Lower lobe of right lung (tissue), 2 donors: ENCODE measurements at regions of chr13 and their contacts with region 1.

Region 1: GRCh38 chr13:51286135-51287002 is 53.1 kb upstream of the SERPINE3 start:
- DNase-seq: peak; percentile 77
- ATAC-seq: peak; percentile 82 to 93
- H3K4me3 ChIP-seq: no peak overlapping the region
- H3K27ac ChIP-seq: no peak overlapping the region
- H3K4me1 ChIP-seq: no peaks in the 10 kb centered on the region
- H3K27me3 ChIP-seq: no peaks in the 10 kb centered on the region
- CTCF ChIP-seq: peak; percentile 98

Region 2: GRCh38 chr13:51101636-51102235 is 184.6 kb before region 1 on chr13:
- intact Hi-C with region 1: no loop called
- DNase-seq: no peak
- ATAC-seq: no peak
- H3K4me3 ChIP-seq: no peak overlapping the region
- H3K27ac ChIP-seq: no peak overlapping the region
- H3K4me1 ChIP-seq: no peaks in the 10 kb centered on the region
- H3K27me3 ChIP-seq: no peaks in the 10 kb centered on the region
- CTCF ChIP-seq: no peak

Region 3: GRCh38 chr13:51125498-51126226 is 160.7 kb before region 1 on chr13:
- intact Hi-C with region 1: loop called (anchors 10 kb)
- DNase-seq: peak; percentile 63
- ATAC-seq: peak; percentile 82 to 88
- H3K4me3 ChIP-seq: no peak overlapping the region
- H3K27ac ChIP-seq: no peak overlapping the region
- H3K4me1 ChIP-seq: no peaks in the 10 kb centered on the region
- H3K27me3 ChIP-seq: no peaks in the 10 kb centered on the region
- CTCF ChIP-seq: peak; percentile 74

Region 4: DNA sequence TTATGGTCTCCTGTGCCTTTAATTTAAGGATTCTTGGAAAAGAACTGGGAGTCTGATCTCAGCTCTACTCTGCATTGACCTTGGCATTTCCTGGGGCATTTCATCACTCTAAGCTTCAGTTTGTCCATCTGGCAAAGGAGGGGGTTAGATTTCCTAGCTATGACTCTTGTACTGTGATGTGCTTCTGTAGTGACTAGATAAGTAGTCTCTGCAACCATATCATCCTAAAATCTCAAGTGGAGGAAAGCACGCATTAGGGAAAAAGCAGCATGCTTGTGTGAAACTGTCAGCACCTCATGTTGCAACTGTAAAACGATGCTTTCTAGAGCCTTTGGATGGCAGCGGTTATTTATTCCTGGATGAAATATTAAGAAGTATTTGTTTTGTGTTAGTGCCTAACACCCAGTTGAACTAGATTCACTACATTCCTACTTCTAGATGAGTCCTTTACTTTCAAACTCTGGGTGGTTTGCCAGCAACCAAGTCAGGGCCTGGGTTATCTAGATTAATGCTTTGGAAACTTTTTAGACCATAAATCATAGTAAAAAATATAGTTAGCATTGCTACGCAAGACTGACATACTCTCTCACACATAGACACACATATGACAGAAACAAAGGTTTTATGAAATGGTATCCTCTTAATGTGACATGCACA is 304.7 kb after region 1 on chr13:
- intact Hi-C with region 1: no loop called
- DNase-seq: no peak
- ATAC-seq: peak; percentile 81 to 89
- H3K4me3 ChIP-seq: no peak overlapping the region
- H3K27ac ChIP-seq: peak overlapping the region; percentile 37
- H3K4me1 ChIP-seq: peaks cover 32% of the 10 kb centered on the region
- H3K27me3 ChIP-seq: no peaks in the 10 kb centered on the region
- CTCF ChIP-seq: no peak